ENCODE measurements at regions of chr5 and their contacts with region 1.

Region 1: DNA sequence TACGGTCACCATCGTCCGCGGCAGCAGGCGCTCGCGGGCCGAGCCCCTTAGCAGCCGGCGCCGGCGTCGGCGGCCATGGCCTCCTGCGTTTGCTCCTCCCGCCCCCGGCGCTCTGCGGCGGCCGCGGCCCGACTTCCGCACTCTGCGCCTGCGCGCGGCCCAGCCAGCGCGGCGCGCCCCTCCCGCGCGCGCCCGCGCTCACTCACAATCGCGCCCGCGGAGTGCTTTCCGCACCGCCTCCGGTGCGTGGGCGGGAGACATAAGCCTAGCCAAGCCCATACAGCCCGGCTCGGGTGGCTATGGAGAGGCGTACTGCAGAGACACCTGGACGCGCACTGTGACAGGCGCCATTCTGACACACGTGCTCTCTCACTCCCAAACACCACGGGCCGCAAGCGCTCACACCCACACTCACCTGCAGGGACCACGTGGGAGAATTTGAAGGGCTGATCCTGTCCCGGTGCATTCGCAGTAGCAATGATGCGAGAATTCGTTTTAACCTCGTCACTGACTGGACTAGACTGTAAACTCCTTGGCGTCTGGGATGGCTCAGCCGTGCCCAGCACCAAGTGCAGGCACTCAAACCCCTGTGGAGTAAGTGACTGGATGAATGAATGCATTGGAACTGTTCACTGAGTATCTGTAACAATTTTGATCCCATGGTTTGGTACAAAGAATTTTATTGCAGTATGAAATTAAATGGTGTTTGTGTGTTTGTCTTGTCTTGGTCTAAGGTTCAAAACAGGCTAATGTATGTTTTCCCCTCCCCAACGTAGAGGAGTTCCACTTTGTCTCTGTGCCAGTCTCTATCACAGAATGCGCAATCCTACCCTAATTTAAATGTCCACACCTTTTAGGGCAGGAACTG is at the start of gene RNF145:
- DNase-seq: peak; percentile 85
- H3K4me3 Mint-ChIP-seq: peak within 1 kb of the TSS; percentile 95
- H3K27ac Mint-ChIP-seq: peak within 1 kb of the TSS; percentile 96
- H3K4me1 Mint-ChIP-seq: peaks cover 65% of the 10 kb centered on the region
- H3K27me3 Mint-ChIP-seq: no peaks in the 10 kb centered on the region
- CTCF ChIP-seq: no peak
- total RNA-seq, gene RNF145: 169 and 193 TPM in 2 replicates

Region 2: GRCh38 chr5:157888814-157889532 is 1320.7 kb before region 1 on chr5:
- CTCF ChIA-PET with region 1: no interaction called
- intact Hi-C with region 1: loop called (anchors 10 kb)
- DNase-seq: peak; percentile 39
- H3K4me3 Mint-ChIP-seq: peak overlapping the region; percentile 47
- H3K27ac Mint-ChIP-seq: peak overlapping the region; percentile 79
- H3K4me1 Mint-ChIP-seq: peaks cover 49% of the 10 kb centered on the region
- H3K27me3 Mint-ChIP-seq: no peaks in the 10 kb centered on the region
- CTCF ChIP-seq: no peak

Region 3: GRCh38 chr5:159178978-159179377 is 30.7 kb before region 1 on chr5:
- CTCF ChIA-PET with region 1: interaction called, 9 read pairs
- intact Hi-C with region 1: loop called (anchors 2 kb)
- DNase-seq: peak; percentile 67
- H3K4me3 Mint-ChIP-seq: peak overlapping the region; percentile 13
- H3K27ac Mint-ChIP-seq: peak overlapping the region; percentile 98
- H3K4me1 Mint-ChIP-seq: peaks cover 67% of the 10 kb centered on the region
- H3K27me3 Mint-ChIP-seq: no peaks in the 10 kb centered on the region
- CTCF ChIP-seq: no peak

Region 4: GRCh38 chr5:159184858-159185381 is 24.8 kb before region 1 on chr5:
- CTCF ChIA-PET with region 1: interaction called, 10 read pairs
- intact Hi-C with region 1: loop called (anchors 1 kb)
- DNase-seq: peak; percentile 40
- H3K4me3 Mint-ChIP-seq: peak overlapping the region; percentile 41
- H3K27ac Mint-ChIP-seq: peak overlapping the region; percentile 85
- H3K4me1 Mint-ChIP-seq: peaks cover 69% of the 10 kb centered on the region
- H3K27me3 Mint-ChIP-seq: no peaks in the 10 kb centered on the region
- CTCF ChIP-seq: no peak

Region 5: GRCh38 chr5:159262859-159263567 is 53.3 kb after region 1 on chr5 and contains the start of gene UBLCP1:
- CTCF ChIA-PET with region 1: interaction called, 3 read pairs
- intact Hi-C with region 1: loop called (anchors 1 kb)
- DNase-seq: peak; percentile 84
- H3K4me3 Mint-ChIP-seq: peak within 1 kb of the TSS; percentile 84
- H3K27ac Mint-ChIP-seq: peak within 1 kb of the TSS; percentile 92
- H3K4me1 Mint-ChIP-seq: peaks cover 9% of the 10 kb centered on the region
- H3K27me3 Mint-ChIP-seq: no peaks in the 10 kb centered on the region
- CTCF ChIP-seq: no peak
- total RNA-seq, gene UBLCP1: 35.8 and 39.5 TPM in 2 replicates

Region 6: DNA sequence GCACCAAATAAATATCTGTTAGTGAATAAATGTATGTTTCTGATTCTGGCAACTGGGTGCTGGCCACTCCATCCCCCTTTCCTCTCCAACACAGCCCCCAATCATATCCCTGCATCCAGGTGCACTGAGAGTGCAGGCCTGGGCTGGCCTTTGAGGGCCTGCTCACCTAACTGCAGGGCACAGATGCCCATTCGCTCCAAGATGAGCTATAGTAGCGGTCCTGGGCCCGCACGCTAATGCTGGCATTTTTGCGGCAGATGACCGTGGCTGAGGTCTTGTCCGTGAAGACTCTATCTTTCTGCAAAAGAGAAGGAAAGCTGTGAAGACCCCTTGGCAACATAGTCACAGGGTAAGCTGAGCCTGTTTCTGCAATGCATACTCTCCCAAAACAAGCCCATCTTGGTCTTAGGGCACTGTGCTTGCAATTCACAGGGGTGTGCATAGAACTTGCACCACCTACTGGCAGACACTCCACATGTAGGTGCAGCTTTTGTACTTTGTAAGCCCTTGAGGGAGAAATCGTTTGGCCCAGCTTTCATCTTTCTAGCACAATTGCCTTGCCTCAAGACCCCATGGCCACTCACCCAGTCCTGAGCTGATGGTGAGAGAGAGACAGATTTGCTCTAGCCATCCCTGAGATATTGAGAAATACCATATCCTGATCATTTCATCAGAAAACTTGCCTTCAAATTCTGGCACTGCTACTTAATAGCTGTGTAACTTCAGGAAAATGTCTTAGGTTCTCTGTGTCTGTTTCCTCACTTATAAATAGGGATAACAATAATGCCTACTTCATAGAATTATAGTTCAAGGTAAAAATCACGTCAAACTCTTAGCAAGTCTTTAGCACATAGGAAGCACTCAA is 107.1 kb after region 1 on chr5:
- CTCF ChIA-PET with region 1: no interaction called
- intact Hi-C with region 1: loop called (anchors 5 kb)
- DNase-seq: peak; percentile 57
- H3K4me3 Mint-ChIP-seq: no peak overlapping the region
- H3K27ac Mint-ChIP-seq: no peak overlapping the region
- H3K4me1 Mint-ChIP-seq: no peaks in the 10 kb centered on the region
- H3K27me3 Mint-ChIP-seq: peaks cover 53% of the 10 kb centered on the region
- CTCF ChIP-seq: peak; percentile 74

Measured in Calu3 (cell line).